ENCODE measurements at regions of chr17 and their contacts with region 1.

Region 1: GRCh38 chr17:55348749-55349354 is 72.8 kb downstream of the MMD start:
- DNase-seq: no peak
- H3K4me3 ChIP-seq: no peak overlapping the region
- H3K27me3 ChIP-seq: no peaks in the 10 kb centered on the region
- CTCF ChIP-seq: peak; percentile 91

Region 2: DNA sequence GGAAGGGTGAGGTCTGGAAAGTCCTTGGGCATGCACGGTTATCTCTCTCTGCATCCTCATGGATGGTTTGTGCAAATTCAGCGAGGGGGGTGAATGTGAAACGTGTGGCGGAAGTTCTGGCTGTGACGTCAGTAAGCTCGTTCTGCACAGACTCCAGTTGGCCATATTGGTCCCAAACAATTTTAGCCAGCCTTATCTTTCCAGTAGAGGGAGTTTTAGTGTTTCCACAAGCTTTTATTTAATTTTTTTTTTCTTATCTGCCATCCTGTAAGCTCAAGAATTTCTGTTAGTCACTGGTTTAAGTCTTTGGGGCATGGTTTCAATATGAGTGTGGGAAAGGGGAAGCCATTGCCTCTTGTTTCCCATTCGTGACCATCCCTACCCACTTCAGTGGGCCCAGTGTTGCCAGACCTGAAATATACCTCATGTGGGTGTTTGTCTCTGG is 45.1 kb before region 1 on chr17:
- CTCF ChIA-PET with region 1: interaction called, 19 read pairs
- POLR2A ChIA-PET with region 1: no interaction called
- DNase-seq: no peak
- H3K4me3 ChIP-seq: no peak overlapping the region
- H3K27me3 ChIP-seq: peaks cover 2% of the 10 kb centered on the region; the same call in 1 of the 2 replicates
- CTCF ChIP-seq: peak; percentile 24; the same call in 1 of the 2 replicates

Region 3: DNA sequence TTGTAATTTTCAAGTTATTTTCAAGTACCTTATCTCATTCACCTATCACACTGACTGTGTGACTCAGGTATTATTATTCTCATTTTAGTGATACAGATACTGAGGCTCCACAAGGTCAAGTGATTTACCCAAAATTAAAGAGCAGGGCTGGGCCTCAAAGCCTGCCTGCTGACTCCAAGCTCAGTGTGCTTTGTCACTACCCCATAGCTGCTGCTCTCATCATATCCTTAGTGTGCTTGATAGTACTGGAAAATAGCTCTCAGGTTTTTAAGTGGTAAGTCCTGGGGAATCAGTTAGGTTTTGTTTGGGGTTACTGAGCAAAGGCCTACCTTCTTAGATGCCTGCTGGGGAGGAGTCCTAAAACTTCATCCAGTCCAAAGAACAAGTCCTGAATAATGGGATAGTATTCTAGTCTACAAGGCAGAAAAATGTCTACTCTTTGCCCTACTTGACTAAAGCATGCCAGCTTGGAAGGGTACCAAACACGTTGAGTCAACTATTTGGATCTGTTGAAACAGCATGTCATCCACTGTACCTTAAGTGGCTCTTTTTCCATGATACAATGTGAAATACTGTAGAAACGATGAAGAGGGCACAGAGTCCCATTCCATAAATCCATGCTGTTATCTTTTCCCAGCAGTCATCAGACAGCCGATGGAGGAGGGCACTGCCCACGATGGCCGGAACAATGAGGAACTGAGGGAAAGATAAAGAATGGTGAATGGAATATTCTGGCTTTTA is 62.0 kb after region 1 on chr17:
- CTCF ChIA-PET with region 1: no interaction called
- POLR2A ChIA-PET with region 1: no interaction called
- DNase-seq: no peak
- H3K4me3 ChIP-seq: no peak overlapping the region
- H3K27me3 ChIP-seq: no peaks in the 10 kb centered on the region
- CTCF ChIP-seq: no peak

Region 4: DNA sequence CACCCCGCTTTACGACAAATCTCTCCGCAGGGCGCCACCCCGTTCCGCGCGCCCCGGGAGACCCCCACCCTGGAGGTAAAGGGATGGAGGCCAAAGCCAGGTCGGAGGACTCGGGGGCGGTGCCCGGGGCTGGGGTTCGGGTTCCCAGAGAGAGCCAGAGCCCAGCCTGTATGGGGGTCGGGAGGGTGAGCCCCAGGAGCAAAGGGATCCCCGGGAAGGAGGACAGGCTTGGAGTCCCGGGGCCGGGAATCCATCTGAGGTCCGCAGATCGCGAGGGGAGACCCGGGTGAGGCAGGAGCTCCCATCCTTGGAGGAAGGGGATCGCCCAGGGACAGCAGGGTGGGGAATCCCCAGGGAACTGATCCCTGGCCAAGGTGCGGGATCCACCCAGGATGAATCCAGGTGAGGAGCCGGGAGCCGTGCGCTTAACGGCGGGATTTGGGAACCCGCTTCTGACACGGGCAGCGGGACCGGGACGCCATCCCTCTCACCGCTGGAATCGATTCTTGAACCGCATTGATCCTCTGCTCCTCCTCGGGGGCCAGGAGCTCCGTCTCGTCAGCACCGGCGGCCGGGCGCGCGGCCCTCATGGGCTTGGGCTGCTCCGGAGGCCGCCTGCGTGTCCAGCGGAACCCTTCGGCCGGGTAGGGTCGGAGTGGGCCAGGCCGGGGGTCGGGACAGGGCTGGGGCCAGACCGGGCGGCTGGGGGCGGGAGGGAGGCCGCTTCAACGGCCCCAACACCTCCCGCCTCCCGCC is 72.5 kb after region 1 on chr17 and contains the start of gene MMD:
- CTCF ChIA-PET with region 1: no interaction called
- POLR2A ChIA-PET with region 1: no interaction called
- DNase-seq: no peak
- H3K4me3 ChIP-seq: peak within 1 kb of the TSS; percentile 69
- H3K27me3 ChIP-seq: peaks cover 2% of the 10 kb centered on the region; the same call in 1 of the 2 replicates
- CTCF ChIP-seq: no peak
- polyA plus RNA-seq, gene MMD: 4.5 and 5.8 TPM in 2 replicates

Region 5: GRCh38 chr17:55513885-55514591 is 165.2 kb after region 1 on chr17:
- CTCF ChIA-PET with region 1: interaction called, 24 read pairs
- POLR2A ChIA-PET with region 1: no interaction called
- DNase-seq: no peak
- H3K4me3 ChIP-seq: no peak overlapping the region
- H3K27me3 ChIP-seq: no peaks in the 10 kb centered on the region
- CTCF ChIP-seq: peak; percentile 94

Region 6: GRCh38 chr17:55540414-55541091 is 191.7 kb after region 1 on chr17:
- CTCF ChIA-PET with region 1: no interaction called
- POLR2A ChIA-PET with region 1: no interaction called
- DNase-seq: peak; percentile 27
- H3K4me3 ChIP-seq: no peak overlapping the region
- H3K27me3 ChIP-seq: no peaks in the 10 kb centered on the region; the same call in 1 of the 2 replicates
- CTCF ChIP-seq: no peak

Region 7: DNA sequence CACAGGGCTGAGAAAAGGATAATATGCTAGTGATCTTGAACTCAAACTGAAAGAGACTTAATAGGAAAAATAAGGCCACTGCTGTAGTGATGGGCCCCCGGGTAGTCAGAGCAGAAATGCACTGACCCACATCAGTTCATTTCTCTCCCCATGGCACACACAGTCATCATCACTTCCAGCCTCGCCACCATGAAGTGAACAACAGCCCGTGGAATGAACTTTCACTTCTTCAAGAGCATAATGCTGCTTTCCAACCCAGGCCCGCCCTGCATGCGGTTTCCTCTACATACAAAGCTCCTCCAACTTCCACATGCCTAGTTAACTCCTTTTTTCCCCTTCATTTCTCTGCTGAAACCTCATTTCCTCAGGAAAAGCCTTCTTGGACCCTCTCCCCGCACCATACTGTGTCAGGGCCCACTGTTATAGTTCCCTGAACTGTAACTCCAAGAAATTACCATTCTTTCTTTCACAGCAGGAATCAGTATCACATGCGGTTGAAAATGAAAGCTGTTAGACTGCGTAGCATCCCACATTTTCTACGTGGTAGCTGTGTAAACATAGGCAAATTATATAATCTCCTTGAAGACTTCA is 228.2 kb after region 1 on chr17:
- CTCF ChIA-PET with region 1: no interaction called
- POLR2A ChIA-PET with region 1: no interaction called
- DNase-seq: peak; percentile 45
- H3K4me3 ChIP-seq: peak overlapping the region; percentile 2
- H3K27me3 ChIP-seq: no peaks in the 10 kb centered on the region
- CTCF ChIP-seq: no peak

Measured in BJ (cell line).